ENCODE measurements at regions of chr3 and their contacts with region 1.

Region 1: GRCh38 chr3:184135149-184135910 is at the start of gene EIF2B5:
- DNase-seq: peak; percentile 72 to 95 (median 82)
- ATAC-seq: peak; percentile 88
- H3K4me3 ChIP-seq: peak within 1 kb of the TSS; percentile 99
- H3K4me3 Mint-ChIP-seq: peak within 1 kb of the TSS; percentile 99
- H3K27ac ChIP-seq: peak within 1 kb of the TSS; percentile 71 to 76
- H3K27ac Mint-ChIP-seq: peak within 1 kb of the TSS; percentile 97
- H3K4me1 ChIP-seq: peaks cover 29% of the 10 kb centered on the region
- H3K4me1 Mint-ChIP-seq: peaks cover 50% of the 10 kb centered on the region
- H3K27me3 ChIP-seq: no peaks in the 10 kb centered on the region
- H3K27me3 Mint-ChIP-seq: no peaks in the 10 kb centered on the region
- CTCF ChIP-seq: peak; percentile 31
- total RNA-seq, gene EIF2B5: 53.6 TPM

Region 2: DNA sequence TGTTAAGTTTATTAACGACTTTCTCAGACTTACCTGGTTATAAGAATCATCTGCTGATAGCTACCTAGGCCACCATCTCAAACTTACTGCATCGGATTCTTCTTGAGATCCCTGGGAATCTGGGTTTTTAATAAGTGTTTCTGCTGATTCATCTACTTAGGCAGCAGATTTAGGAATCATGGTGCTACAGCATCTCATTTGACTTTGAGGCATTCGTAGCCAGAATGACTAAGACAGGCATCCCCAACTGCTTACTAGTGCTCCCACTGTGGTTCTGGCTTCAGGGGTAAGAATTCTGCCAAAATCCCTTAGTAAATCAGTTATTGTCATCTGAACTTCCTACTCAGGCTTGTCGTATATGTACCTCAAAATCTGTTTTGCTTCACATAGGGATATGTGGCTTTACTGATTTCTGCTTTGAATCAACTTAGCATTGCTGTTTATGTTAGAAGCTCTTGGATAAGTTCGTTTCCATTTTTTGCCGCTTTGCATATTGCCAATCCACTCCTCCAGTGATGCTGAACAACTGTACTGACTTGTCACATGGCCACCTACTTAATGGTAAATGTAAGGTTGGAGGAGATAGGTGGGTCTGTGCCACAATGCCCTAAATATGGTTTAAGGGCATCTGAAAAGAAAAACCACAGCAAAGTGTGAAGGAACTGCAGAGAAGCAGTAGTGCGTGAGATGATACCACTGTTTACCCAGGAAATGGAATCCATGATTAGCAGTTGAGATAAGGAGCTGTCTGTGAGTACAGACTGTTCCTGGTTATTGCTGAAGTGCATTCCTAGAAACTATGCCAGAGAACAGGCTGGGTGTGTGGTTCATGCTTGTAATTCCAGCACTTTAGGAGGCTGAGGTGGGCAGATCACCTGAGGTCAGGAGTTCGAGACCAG is 370.2 kb before region 1 on chr3:
- CTCF ChIA-PET with region 1: no interaction called
- POLR2A ChIA-PET with region 1: no interaction called
- intact Hi-C with region 1: no loop called
- DNase-seq: peak in 1 of 14 experiments; percentile 1
- ATAC-seq: no peak
- H3K4me3 ChIP-seq: no peak overlapping the region
- H3K4me3 Mint-ChIP-seq: no peak overlapping the region
- H3K27ac ChIP-seq: no peak overlapping the region
- H3K27ac Mint-ChIP-seq: peak overlapping the region; percentile 19
- H3K4me1 ChIP-seq: peaks cover 10% of the 10 kb centered on the region
- H3K4me1 Mint-ChIP-seq: peaks cover 15% of the 10 kb centered on the region
- H3K27me3 ChIP-seq: no peaks in the 10 kb centered on the region
- H3K27me3 Mint-ChIP-seq: no peaks in the 10 kb centered on the region
- CTCF ChIP-seq: no peak

Region 3: GRCh38 chr3:184154885-184155643 is 19.7 kb after region 1 on chr3 and contains the start of gene DVL3:
- CTCF ChIA-PET with region 1: interaction called, 4 read pairs
- POLR2A ChIA-PET with region 1: interaction called, 13 read pairs
- intact Hi-C with region 1: loop called in 1 of 2 experiments (anchors 2 kb)
- DNase-seq: peak in 11 of 14 experiments; percentile 7 to 73 (median 44)
- ATAC-seq: peak; percentile 64
- H3K4me3 ChIP-seq: peak within 1 kb of the TSS; percentile 90
- H3K4me3 Mint-ChIP-seq: peak within 1 kb of the TSS; percentile 95
- H3K27ac ChIP-seq: peak within 1 kb of the TSS in 1 of 2 donors; percentile 30
- H3K27ac Mint-ChIP-seq: peak within 1 kb of the TSS; percentile 81
- H3K4me1 ChIP-seq: peaks cover 32% of the 10 kb centered on the region
- H3K4me1 Mint-ChIP-seq: peaks cover 45% of the 10 kb centered on the region
- H3K27me3 ChIP-seq: no peaks in the 10 kb centered on the region
- H3K27me3 Mint-ChIP-seq: no peaks in the 10 kb centered on the region
- CTCF ChIP-seq: no peak
- total RNA-seq, gene DVL3: 30.0 to 31.7 TPM

Region 4: DNA sequence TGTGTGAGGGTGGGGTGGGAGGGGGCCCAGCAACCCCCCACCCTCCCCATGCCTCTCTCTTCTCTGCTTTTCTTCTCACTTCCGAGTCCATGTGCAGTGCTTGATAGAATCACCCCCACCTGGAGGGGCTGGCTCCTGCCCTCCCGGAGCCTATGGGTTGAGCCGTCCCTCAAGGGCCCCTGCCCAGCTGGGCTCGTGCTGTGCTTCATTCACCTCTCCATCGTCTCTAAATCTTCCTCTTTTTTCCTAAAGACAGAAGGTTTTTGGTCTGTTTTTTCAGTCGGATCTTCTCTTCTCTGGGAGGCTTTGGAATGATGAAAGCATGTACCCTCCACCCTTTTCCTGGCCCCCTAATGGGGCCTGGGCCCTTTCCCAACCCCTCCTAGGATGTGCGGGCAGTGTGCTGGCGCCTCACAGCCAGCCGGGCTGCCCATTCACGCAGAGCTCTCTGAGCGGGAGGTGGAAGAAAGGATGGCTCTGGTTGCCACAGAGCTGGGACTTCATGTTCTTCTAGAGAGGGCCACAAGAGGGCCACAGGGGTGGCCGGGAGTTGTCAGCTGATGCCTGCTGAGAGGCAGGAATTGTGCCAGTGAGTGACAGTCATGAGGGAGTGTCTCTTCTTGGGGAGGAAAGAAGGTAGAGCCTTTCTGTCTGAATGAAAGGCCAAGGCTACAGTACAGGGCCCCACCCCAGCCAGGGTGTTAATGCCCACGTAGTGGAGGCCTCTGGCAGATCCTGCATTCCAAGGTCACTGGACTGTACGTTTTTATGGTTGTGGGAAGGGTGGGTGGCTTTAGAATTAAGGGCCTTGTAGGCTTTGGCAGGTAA is 210.2 kb after region 1 on chr3:
- CTCF ChIA-PET with region 1: no interaction called
- POLR2A ChIA-PET with region 1: no interaction called
- intact Hi-C with region 1: no loop called
- DNase-seq: peak in 1 of 14 experiments; percentile 28
- ATAC-seq: no peak
- H3K4me3 ChIP-seq: no peak overlapping the region
- H3K4me3 Mint-ChIP-seq: no peak overlapping the region
- H3K27ac ChIP-seq: no peak overlapping the region
- H3K27ac Mint-ChIP-seq: no peak overlapping the region
- H3K4me1 ChIP-seq: no peaks in the 10 kb centered on the region
- H3K4me1 Mint-ChIP-seq: no peaks in the 10 kb centered on the region
- H3K27me3 ChIP-seq: no peaks in the 10 kb centered on the region
- H3K27me3 Mint-ChIP-seq: no peaks in the 10 kb centered on the region
- CTCF ChIP-seq: no peak